Posterior vena cava (tissue), 2 donors: ENCODE measurements at regions of chr9 and their contacts with region 1.

Region 1: GRCh38 chr9:88362681-88363080 is 25.6 kb upstream of the SPIN1 start:
- DNase-seq: no peak

Region 2: GRCh38 chr9:86854898-86855523 is 1507.7 kb before region 1 on chr9:
- intact Hi-C with region 1: loop called in 1 of 2 experiments (anchors 10 kb)
- DNase-seq: no peak